ENCODE measurements at regions of chr7 and their contacts with region 1.

Region 1: DNA sequence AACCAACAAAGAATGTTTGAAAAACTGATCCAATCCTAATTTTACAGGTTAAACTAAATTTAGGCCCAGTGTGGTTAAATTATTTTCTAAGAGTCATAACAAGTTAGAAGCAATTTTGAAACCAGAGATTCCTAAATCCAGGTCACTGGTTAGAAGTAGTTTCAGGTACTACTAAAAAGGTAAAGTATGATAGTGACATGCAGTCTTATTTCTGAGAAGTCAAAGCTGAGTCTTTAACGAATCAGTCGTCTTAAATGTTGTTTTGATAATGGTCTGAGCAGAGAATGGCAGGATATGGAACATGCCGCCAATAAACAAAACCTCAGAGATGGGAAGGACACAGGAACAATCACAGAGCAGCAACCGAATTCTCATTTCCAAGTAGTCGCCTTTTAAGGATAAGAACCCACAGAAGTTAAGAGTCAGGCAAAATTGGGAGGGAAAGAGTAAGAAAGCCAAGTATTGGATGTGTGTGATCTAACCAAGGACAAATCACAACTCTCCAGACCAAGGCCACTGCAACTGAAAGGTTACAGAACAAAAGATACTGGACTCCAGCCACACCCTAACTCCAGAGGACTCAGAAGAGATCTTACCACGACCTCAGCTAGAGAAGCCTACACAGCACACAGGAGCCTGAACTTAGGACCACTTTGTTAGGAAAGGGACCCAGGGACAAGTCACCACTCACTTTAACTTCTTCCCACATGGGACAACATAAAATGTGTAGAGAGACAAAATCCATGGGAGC is 19.7 kb downstream of the TMEM243 start:
- DNase-seq: no peak
- ATAC-seq: no peak
- H3K4me3 ChIP-seq: no peak overlapping the region
- H3K4me3 Mint-ChIP-seq: no peak overlapping the region
- H3K27ac ChIP-seq: peak overlapping the region in 1 of 2 experiments; percentile 17
- H3K27ac Mint-ChIP-seq: peak overlapping the region; percentile 81
- H3K4me1 ChIP-seq: peaks cover 34% of the 10 kb centered on the region
- H3K4me1 Mint-ChIP-seq: peaks cover 74% of the 10 kb centered on the region
- H3K27me3 ChIP-seq: no peaks in the 10 kb centered on the region
- H3K27me3 Mint-ChIP-seq: no peaks in the 10 kb centered on the region
- CTCF ChIP-seq: no peak

Region 2: DNA sequence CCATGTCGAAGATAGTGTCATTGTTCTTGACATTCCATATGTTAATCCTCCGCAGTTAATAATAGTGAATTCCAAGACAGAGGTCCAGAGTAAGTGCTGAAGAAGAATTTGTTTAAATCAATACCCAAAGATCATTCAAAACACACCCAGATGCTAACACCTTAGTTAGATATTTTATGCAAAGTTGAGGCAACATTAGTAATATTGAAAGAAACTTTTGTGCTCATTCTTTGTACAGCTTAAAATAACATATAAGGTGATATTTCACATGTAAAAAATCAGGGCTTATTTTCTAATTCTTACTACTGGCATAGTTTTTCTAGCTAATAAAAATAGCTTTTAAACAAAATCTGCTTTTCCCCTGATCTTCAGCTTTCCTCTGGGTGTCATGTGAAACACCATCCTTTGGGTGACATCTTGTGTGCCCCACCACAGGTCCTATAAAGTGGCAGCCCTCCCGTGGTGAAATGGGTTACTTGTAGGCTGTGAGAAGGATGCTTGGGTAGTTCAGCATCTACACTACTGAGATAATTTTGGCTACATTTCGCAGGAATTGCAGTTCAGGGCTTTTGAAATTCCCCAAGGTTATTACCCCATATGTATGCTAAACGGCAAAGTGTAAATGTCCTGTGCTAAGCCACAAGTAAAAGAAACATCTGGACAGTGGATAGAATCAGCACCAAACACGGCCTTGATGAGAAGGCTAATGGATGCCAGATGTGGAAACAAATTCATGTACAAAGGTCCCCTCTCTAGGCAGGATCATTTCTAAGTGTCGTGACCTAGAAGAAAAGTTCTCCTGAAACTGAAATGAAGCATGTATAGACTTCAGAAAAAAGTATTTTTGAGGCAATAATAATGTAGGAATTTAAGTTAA is 450.8 kb before region 1 on chr7:
- CTCF ChIA-PET with region 1: no interaction called
- POLR2A ChIA-PET with region 1: no interaction called
- intact Hi-C with region 1: no loop called
- DNase-seq: no peak
- ATAC-seq: no peak
- H3K4me3 ChIP-seq: no peak overlapping the region
- H3K4me3 Mint-ChIP-seq: no peak overlapping the region
- H3K27ac ChIP-seq: no peak overlapping the region
- H3K27ac Mint-ChIP-seq: no peak overlapping the region
- H3K4me1 ChIP-seq: no peaks in the 10 kb centered on the region
- H3K4me1 Mint-ChIP-seq: no peaks in the 10 kb centered on the region
- H3K27me3 ChIP-seq: no peaks in the 10 kb centered on the region
- H3K27me3 Mint-ChIP-seq: no peaks in the 10 kb centered on the region
- CTCF ChIP-seq: no peak

Region 3: GRCh38 chr7:87159538-87159937 is 40.3 kb before region 1 on chr7:
- CTCF ChIA-PET with region 1: no interaction called
- POLR2A ChIA-PET with region 1: no interaction called
- intact Hi-C with region 1: loop called in 1 of 2 experiments (anchors 5 kb)
- DNase-seq: no peak
- ATAC-seq: no peak
- H3K4me3 ChIP-seq: no peak overlapping the region
- H3K4me3 Mint-ChIP-seq: no peak overlapping the region
- H3K27ac ChIP-seq: no peak overlapping the region
- H3K27ac Mint-ChIP-seq: peak overlapping the region; percentile 19
- H3K4me1 ChIP-seq: peaks cover 31% of the 10 kb centered on the region
- H3K4me1 Mint-ChIP-seq: peaks cover 72% of the 10 kb centered on the region
- H3K27me3 ChIP-seq: no peaks in the 10 kb centered on the region
- H3K27me3 Mint-ChIP-seq: no peaks in the 10 kb centered on the region
- CTCF ChIP-seq: no peak

Region 4: DNA sequence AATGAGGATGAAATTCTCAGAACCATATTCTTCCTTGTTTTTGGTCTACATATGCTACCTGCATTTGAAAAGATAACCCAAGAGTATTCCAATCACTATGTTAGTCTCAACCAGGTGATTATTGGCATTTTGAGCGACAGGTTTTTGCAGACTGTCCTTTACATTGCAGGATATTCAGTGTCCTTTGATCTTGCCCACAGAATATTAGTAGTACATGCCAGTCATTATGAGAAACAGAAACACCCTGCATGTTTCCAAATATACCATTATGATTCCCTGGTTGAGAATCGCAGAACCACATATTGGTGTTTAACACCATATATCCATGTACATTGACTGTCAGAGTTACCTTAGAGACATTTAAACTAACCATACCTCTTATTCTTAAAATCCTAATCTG is 10.9 kb before region 1 on chr7:
- CTCF ChIA-PET with region 1: interaction called, 3 read pairs
- POLR2A ChIA-PET with region 1: interaction called, 4 read pairs
- intact Hi-C with region 1: loop called in 1 of 2 experiments (anchors 1 kb)
- DNase-seq: no peak
- ATAC-seq: no peak
- H3K4me3 ChIP-seq: no peak overlapping the region
- H3K4me3 Mint-ChIP-seq: no peak overlapping the region
- H3K27ac ChIP-seq: no peak overlapping the region
- H3K27ac Mint-ChIP-seq: no peak overlapping the region
- H3K4me1 ChIP-seq: no peaks in the 10 kb centered on the region
- H3K4me1 Mint-ChIP-seq: peaks cover 28% of the 10 kb centered on the region
- H3K27me3 ChIP-seq: no peaks in the 10 kb centered on the region
- H3K27me3 Mint-ChIP-seq: no peaks in the 10 kb centered on the region
- CTCF ChIP-seq: no peak

Region 5: GRCh38 chr7:87213811-87214210 is 13.9 kb after region 1 on chr7:
- CTCF ChIA-PET with region 1: interaction called, 5 read pairs
- POLR2A ChIA-PET with region 1: interaction called, 14 read pairs
- intact Hi-C with region 1: loop called (anchors 1 to 2 kb)
- DNase-seq: no peak
- ATAC-seq: no peak
- H3K4me3 ChIP-seq: no peak overlapping the region
- H3K4me3 Mint-ChIP-seq: peak overlapping the region; percentile 81
- H3K27ac ChIP-seq: peak overlapping the region in 1 of 2 experiments; percentile 60
- H3K27ac Mint-ChIP-seq: peak overlapping the region; percentile 95
- H3K4me1 ChIP-seq: peaks cover 87% of the 10 kb centered on the region
- H3K4me1 Mint-ChIP-seq: peaks cover 87% of the 10 kb centered on the region
- H3K27me3 ChIP-seq: no peaks in the 10 kb centered on the region
- H3K27me3 Mint-ChIP-seq: no peaks in the 10 kb centered on the region
- CTCF ChIP-seq: no peak

Region 6: DNA sequence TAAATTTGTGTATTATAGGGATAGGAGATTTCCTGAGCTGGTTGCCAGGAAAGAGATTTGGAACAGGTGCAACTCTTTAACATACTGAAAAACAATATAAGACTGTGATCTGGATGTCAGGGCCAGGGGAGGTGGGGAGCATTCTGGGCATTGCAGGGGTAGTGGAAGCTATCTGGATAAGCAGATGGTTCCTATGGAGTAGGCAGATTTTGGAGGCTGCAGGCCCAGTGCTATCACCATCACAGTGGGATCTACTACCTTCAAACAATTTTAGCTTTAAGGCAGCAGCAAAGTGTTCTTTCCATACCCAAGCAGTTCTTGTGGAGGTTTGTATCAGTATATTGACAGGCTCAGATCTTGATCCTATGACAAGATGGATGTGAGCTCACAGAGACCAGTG is 805.3 kb after region 1 on chr7:
- CTCF ChIA-PET with region 1: no interaction called
- POLR2A ChIA-PET with region 1: no interaction called
- intact Hi-C with region 1: no loop called
- DNase-seq: no peak
- ATAC-seq: no peak
- H3K4me3 ChIP-seq: no peak overlapping the region
- H3K4me3 Mint-ChIP-seq: no peak overlapping the region
- H3K27ac ChIP-seq: no peak overlapping the region
- H3K27ac Mint-ChIP-seq: no peak overlapping the region
- H3K4me1 ChIP-seq: no peaks in the 10 kb centered on the region
- H3K4me1 Mint-ChIP-seq: no peaks in the 10 kb centered on the region
- H3K27me3 ChIP-seq: no peaks in the 10 kb centered on the region
- H3K27me3 Mint-ChIP-seq: no peaks in the 10 kb centered on the region
- CTCF ChIP-seq: no peak